K562 (cell line): ENCODE measurements at regions of chr19 and their contacts with region 1.

Region 1: DNA sequence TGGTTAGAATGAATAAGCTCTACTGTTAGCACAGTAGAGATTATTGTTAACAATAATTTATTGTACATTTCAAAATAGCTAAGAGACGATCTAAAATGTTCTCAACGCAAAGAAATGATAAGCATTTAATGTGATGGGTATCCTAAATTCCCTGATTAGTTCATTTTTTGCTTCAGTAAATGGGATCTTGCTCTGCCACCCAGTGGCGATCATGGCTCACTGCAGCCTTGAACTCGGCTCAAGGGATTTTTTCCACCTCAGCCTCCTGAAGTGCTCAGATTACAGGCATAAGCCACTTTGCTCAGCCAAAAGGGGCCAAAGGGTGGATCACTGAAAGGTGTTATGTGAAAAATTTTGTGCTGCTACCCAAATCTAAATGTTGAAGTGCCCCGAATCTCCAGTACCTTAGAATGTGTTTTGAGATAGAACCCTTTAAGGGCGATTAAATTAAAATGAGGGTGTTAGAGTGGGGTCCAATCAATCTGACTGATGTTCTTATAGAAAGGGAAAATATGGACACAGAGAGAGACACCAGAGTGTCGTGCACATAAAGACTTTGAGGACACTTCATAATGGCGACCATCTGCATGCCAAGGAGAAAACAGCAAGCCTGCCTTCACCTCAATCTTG is 31.5 kb upstream of the ZNF766 start:
- DNase-seq: peak in 3 of 4 experiments; percentile 30 to 69 (median 38)
- ATAC-seq: peak; percentile 71
- H3K4me3 ChIP-seq: no peak overlapping the region
- H3K27ac ChIP-seq: no peak overlapping the region
- H3K4me1 ChIP-seq: no peaks in the 10 kb centered on the region
- H3K27me3 ChIP-seq: no peaks in the 10 kb centered on the region
- CTCF ChIP-seq: peak; percentile 73 to 88 (median 86)
- EP300 ChIP-seq: no peak
- POLR2A ChIP-seq: no peak
- RAD21 ChIP-seq: peak; percentile 72 to 87

Region 2: GRCh38 chr19:51807111-51807701 is 430.7 kb before region 1 on chr19:
- CTCF ChIA-PET with region 1: no interaction called
- POLR2A ChIA-PET with region 1: interaction called, 3 read pairs
- in situ Hi-C with region 1: no loop called
- intact Hi-C with region 1: loop called (anchors 1 kb)
- DNase-seq: peak; percentile 42 to 85 (median 52)
- ATAC-seq: peak; percentile 77
- H3K4me3 ChIP-seq: no peak overlapping the region
- H3K27ac ChIP-seq: peak overlapping the region; percentile 67
- H3K4me1 ChIP-seq: peaks cover 5 to 59% of the 10 kb centered on the region in 2 experiments; a peak in 4 of 5 replicates
- H3K27me3 ChIP-seq: no peaks in the 10 kb centered on the region
- CTCF ChIP-seq: peak in 2 of 3 experiments; percentile 18 to 41; a peak in 1 of 6 replicates
- EP300 ChIP-seq: peak; percentile 58
- POLR2A ChIP-seq: no peak
- RAD21 ChIP-seq: peak; percentile 24 to 31; a peak in 3 of 4 replicates

Region 3: DNA sequence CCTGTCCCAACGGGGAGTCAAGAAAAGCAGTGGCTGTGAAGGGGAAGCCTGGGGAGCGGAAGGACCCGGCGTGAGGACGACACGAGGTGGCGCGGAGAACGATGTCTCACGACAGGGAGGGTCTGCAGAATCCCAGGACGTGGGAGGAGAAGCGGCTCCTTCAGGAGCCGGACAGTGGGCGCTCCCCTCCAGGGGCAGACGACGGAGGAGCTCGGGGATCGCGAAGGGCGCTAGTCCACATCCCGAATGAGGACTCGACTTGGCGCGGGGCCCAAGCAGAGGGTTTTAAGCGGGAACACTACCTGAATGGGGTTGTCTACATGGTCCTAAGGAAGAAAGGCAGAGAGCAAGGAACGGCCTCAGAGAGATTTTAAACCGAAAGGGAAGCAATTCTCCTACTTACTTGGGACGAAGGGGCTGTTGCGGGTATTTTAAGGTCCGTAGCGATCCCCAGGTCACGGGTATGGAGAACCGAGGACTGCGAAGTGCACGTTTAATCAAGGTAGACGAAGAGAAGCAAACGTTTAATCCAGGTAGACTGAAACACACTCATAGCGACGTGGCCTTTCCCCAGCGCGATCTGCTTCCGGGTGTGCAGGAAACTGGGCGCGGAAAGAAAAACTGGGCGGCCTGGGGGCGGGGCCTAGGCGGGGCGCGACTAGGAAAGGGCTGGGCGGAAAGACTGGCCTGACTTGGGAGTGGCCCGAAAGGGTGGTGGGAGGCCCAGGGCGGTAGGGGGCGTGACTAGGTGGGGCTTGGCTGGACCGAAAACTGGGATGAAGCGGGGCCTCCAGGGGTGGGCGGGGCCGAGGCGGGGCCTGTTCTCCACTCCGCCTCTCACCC is 142.5 kb before region 1 on chr19 and contains the start of gene ZNF841:
- CTCF ChIA-PET with region 1: no interaction called
- POLR2A ChIA-PET with region 1: no interaction called
- in situ Hi-C with region 1: no loop called
- intact Hi-C with region 1: no loop called
- DNase-seq: peak; percentile 96 to 97 (median 96)
- ATAC-seq: peak; percentile 99
- H3K4me3 ChIP-seq: peak within 1 kb of the TSS; percentile 67
- H3K27ac ChIP-seq: peak within 1 kb of the TSS; percentile 84
- H3K4me1 ChIP-seq: peaks cover 3 to 4% of the 10 kb centered on the region in 2 experiments; a peak in 3 of 5 replicates
- H3K27me3 ChIP-seq: no peaks in the 10 kb centered on the region
- CTCF ChIP-seq: no peak
- EP300 ChIP-seq: no peak
- POLR2A ChIP-seq: peak; percentile 89
- RAD21 ChIP-seq: no peak
- polyA plus RNA-seq, gene ZNF841: 3.1 to 5.4 TPM

Region 4: GRCh38 chr19:52139252-52140031 is 98.4 kb before region 1 on chr19 and contains the start of gene ZNF616:
- CTCF ChIA-PET with region 1: interaction called, 6 read pairs
- POLR2A ChIA-PET with region 1: no interaction called
- in situ Hi-C with region 1: no loop called
- intact Hi-C with region 1: loop called (anchors 1 kb)
- DNase-seq: peak; percentile 80 to 97 (median 83)
- ATAC-seq: peak; percentile 98
- H3K4me3 ChIP-seq: peak within 1 kb of the TSS; percentile 76
- H3K27ac ChIP-seq: peak within 1 kb of the TSS; percentile 93
- H3K4me1 ChIP-seq: peaks cover 12% of the 10 kb centered on the region in 2 experiments; a peak in 4 of 5 replicates
- H3K27me3 ChIP-seq: no peaks in the 10 kb centered on the region
- CTCF ChIP-seq: peak; percentile 80 to 91 (median 86)
- EP300 ChIP-seq: peak; percentile 10; the same call in 1 of the 2 replicates
- POLR2A ChIP-seq: peak; percentile 90
- RAD21 ChIP-seq: peak; percentile 68 to 80
- polyA plus RNA-seq, gene ZNF616: 3.4 to 6.5 TPM

Region 5: DNA sequence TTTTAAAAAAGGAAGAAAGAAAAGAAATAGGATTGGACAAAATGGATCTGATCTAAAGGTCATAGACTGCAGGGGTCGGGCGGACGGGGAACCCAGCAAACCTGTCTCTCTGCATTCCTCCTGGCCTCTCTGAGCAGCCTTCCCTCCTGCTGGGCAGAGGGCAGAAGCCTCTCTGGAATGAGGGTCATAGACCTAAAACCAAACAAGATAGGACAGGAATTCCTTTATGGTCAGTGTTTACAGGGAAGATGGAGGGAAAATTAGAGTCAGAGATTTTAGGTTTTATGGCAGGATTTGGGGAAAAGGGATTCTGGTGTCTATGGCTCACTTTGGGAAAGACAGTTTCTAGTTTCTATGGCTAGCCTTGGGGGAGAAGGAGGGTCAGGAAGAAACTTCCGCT is 1374.9 kb after region 1 on chr19:
- CTCF ChIA-PET with region 1: no interaction called
- POLR2A ChIA-PET with region 1: no interaction called
- in situ Hi-C with region 1: no loop called
- intact Hi-C with region 1: no loop called
- DNase-seq: no peak
- ATAC-seq: no peak
- H3K4me3 ChIP-seq: no peak overlapping the region
- H3K27ac ChIP-seq: no peak overlapping the region
- H3K4me1 ChIP-seq: no peaks in the 10 kb centered on the region
- H3K27me3 ChIP-seq: peaks cover 4 to 15% of the 10 kb centered on the region in 2 experiments; a peak in 4 of 5 replicates
- CTCF ChIP-seq: no peak
- EP300 ChIP-seq: no peak
- POLR2A ChIP-seq: no peak
- RAD21 ChIP-seq: no peak